WTC11 (cell line): ENCODE measurements at regions of chr15 and their contacts with region 1.

Region 1: GRCh38 chr15:45604326-45604725 is 17.1 kb downstream of the BLOC1S6 start:
- DNase-seq: no peak
- ATAC-seq: no peak
- H3K4me3 Mint-ChIP-seq: no peak overlapping the region
- H3K27ac Mint-ChIP-seq: no peak overlapping the region
- H3K4me1 Mint-ChIP-seq: no peaks in the 10 kb centered on the region
- H3K27me3 Mint-ChIP-seq: no peaks in the 10 kb centered on the region
- CTCF ChIP-seq: no peak

Region 2: GRCh38 chr15:45634442-45635190 is 30.3 kb after region 1 on chr15 and contains the start of gene SQOR:
- CTCF ChIA-PET with region 1: no interaction called
- POLR2A ChIA-PET with region 1: no interaction called
- DNase-seq: peak; percentile 65
- ATAC-seq: peak; percentile 84
- H3K4me3 Mint-ChIP-seq: peak within 1 kb of the TSS; percentile 79
- H3K27ac Mint-ChIP-seq: no peak within 1 kb of the TSS
- H3K4me1 Mint-ChIP-seq: peaks cover 7% of the 10 kb centered on the region
- H3K27me3 Mint-ChIP-seq: peaks cover 72% of the 10 kb centered on the region
- CTCF ChIP-seq: no peak
- total RNA-seq, gene SQOR: 0.44 to 0.72 TPM (median 0.69 TPM) in 3 replicates

Region 3: GRCh38 chr15:45855907-45856579 is 251.7 kb after region 1 on chr15:
- CTCF ChIA-PET with region 1: no interaction called
- POLR2A ChIA-PET with region 1: no interaction called
- DNase-seq: no peak
- ATAC-seq: no peak
- H3K4me3 Mint-ChIP-seq: no peak overlapping the region
- H3K27ac Mint-ChIP-seq: no peak overlapping the region; the same call in 1 of the 2 replicates
- H3K4me1 Mint-ChIP-seq: 0 out of 2 replicates have a peak, but pooled peaks cover 2% of the 10 kb centered on the region
- H3K27me3 Mint-ChIP-seq: no peaks in the 10 kb centered on the region
- CTCF ChIP-seq: no peak

Region 4: DNA sequence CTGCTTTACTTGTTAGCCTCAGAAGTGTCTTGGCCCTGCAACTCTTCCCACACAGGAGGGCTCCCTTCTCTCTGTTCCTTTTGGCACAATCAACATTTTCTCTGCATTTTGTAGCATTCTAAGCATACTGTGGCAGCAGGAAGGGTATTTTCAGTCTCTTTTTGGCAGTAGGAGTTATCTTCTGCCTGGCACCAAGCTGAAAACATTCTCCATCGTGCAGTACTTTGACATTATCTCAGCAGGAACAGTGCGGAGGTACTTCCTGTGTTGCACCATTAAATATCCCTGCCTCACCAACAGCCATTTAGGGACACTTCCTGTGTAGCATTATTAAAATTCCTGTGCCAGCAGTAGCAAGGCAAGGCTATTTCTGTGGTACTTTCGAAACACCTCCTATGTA is 1879.7 kb after region 1 on chr15:
- CTCF ChIA-PET with region 1: no interaction called
- POLR2A ChIA-PET with region 1: interaction called, 11 read pairs
- DNase-seq: no peak
- ATAC-seq: peak; percentile 36; the same call in 1 of the 2 replicates
- H3K4me3 Mint-ChIP-seq: no peak overlapping the region
- H3K27ac Mint-ChIP-seq: no peak overlapping the region
- H3K4me1 Mint-ChIP-seq: peaks cover 17% of the 10 kb centered on the region
- H3K27me3 Mint-ChIP-seq: no peaks in the 10 kb centered on the region
- CTCF ChIP-seq: no peak